A549 (cell line): ENCODE measurements at regions of chr11 and their contacts with region 1.

Region 1: GRCh38 chr11:130894322-130895025 is 21.8 kb downstream of the SNX19 start:
- DNase-seq: peak; percentile 20 to 66
- ATAC-seq: peak; percentile 75 to 89; a peak in 4 of 6 replicates
- H3K4me3 ChIP-seq: no peak overlapping the region
- H3K27ac ChIP-seq: 0 out of 6 replicates have a peak overlapping the region, but pooled peaks of 1 of the 2 experiments have one; percentile 22
- H3K4me1 ChIP-seq: peaks cover 18% of the 10 kb centered on the region; the same call in 2 of the 3 replicates
- CTCF ChIP-seq: peak; percentile 65
- EP300 ChIP-seq: no peak
- POLR2A ChIP-seq: no peak
- RAD21 ChIP-seq: peak; percentile 61 to 69; a peak in 4 of 5 replicates

Region 2: DNA sequence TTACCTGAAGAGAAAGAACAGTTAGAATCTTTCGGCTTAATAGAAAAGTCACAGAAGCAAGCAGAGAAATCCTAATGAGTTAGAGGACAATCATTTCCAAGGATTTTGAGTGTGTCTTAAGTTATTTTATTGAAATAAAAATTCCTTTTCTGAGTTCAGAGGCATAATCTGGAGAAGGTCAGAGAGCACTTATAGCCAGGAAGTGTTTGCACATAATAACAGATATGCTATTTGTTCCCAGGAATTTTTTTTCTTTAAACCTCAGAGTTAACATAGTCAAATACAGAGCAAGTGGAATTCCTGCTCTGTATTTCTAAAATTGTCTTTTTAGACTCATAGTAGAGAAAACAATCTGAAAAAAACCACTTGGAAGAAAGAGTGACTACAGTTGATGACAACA is 52.5 kb before region 1 on chr11:
- CTCF ChIA-PET with region 1: no interaction called
- POLR2A ChIA-PET with region 1: no interaction called
- DNase-seq: no peak
- ATAC-seq: no peak
- H3K4me3 ChIP-seq: no peak overlapping the region
- H3K27ac ChIP-seq: no peak overlapping the region
- H3K4me1 ChIP-seq: no peaks in the 10 kb centered on the region; the same call in 2 of the 3 replicates
- CTCF ChIP-seq: no peak
- EP300 ChIP-seq: no peak
- POLR2A ChIP-seq: no peak
- RAD21 ChIP-seq: no peak

Region 3: GRCh38 chr11:130882138-130882551 is 12.3 kb before region 1 on chr11:
- CTCF ChIA-PET with region 1: interaction called, 10 read pairs
- POLR2A ChIA-PET with region 1: no interaction called
- DNase-seq: no peak
- ATAC-seq: no peak
- H3K4me3 ChIP-seq: no peak overlapping the region
- H3K27ac ChIP-seq: no peak overlapping the region
- H3K4me1 ChIP-seq: no peaks in the 10 kb centered on the region
- CTCF ChIP-seq: no peak
- EP300 ChIP-seq: no peak
- POLR2A ChIP-seq: no peak
- RAD21 ChIP-seq: no peak

Region 4: GRCh38 chr11:130916238-130916855 is 21.9 kb after region 1 on chr11 and contains the start of gene SNX19:
- CTCF ChIA-PET with region 1: interaction called, 20 read pairs
- POLR2A ChIA-PET with region 1: interaction called, 4 read pairs
- DNase-seq: peak; percentile 60 to 88
- ATAC-seq: peak; percentile 99 to 100
- H3K4me3 ChIP-seq: peak within 1 kb of the TSS; percentile 82
- H3K27ac ChIP-seq: peak within 1 kb of the TSS; percentile 85 to 99
- H3K4me1 ChIP-seq: no peaks in the 10 kb centered on the region
- CTCF ChIP-seq: peak; percentile 76
- EP300 ChIP-seq: no peak
- POLR2A ChIP-seq: peak; percentile 46
- RAD21 ChIP-seq: peak in 1 of 2 experiments; percentile 24; a peak in 1 of 5 replicates
- polyA plus RNA-seq, gene SNX19: 26.7 and 34.4 TPM in 2 replicates